ENCODE measurements at regions of chr12 and their contacts with region 1.

Region 1: GRCh38 chr12:54379401-54380201 is 4.9 kb downstream of the ZNF385A start:
- DNase-seq: peak; percentile 92 to 96
- ATAC-seq: peak; percentile 74 to 91
- H3K4me3 ChIP-seq: peak overlapping the region; percentile 61
- H3K27ac ChIP-seq: peak overlapping the region; percentile 81 to 96
- H3K4me1 ChIP-seq: peaks cover 43% of the 10 kb centered on the region
- CTCF ChIP-seq: peak; percentile 100
- EP300 ChIP-seq: no peak
- POLR2A ChIP-seq: no peak
- RAD21 ChIP-seq: peak; percentile 94 to 96

Region 2: DNA sequence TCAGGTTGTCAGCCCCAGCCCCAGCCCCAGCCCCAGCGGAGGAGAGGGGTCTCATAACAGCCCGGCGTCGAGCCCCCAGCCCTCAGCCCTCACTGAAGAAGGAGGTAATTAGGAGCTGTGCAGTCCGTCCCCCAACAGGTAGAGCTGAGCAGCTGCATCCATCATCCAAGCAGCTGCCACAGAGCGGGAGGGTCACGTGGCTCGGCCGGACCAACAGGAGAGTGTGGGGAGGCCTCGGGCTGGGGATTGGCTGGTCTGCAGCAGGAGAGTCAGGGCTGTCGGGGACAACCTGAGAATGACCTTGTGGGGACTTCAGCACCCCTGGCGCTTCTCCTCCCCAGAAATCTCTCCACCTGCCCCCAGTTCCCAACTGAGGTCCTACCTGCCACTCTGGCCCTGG is 220.5 kb before region 1 on chr12:
- CTCF ChIA-PET with region 1: no interaction called
- POLR2A ChIA-PET with region 1: no interaction called
- DNase-seq: no peak
- ATAC-seq: peak in 1 of 2 experiments; percentile 75; a peak in 3 of 6 replicates
- H3K4me3 ChIP-seq: no peak overlapping the region
- H3K27ac ChIP-seq: no peak overlapping the region
- H3K4me1 ChIP-seq: no peaks in the 10 kb centered on the region
- CTCF ChIP-seq: no peak
- EP300 ChIP-seq: no peak
- POLR2A ChIP-seq: no peak
- RAD21 ChIP-seq: no peak

Region 3: DNA sequence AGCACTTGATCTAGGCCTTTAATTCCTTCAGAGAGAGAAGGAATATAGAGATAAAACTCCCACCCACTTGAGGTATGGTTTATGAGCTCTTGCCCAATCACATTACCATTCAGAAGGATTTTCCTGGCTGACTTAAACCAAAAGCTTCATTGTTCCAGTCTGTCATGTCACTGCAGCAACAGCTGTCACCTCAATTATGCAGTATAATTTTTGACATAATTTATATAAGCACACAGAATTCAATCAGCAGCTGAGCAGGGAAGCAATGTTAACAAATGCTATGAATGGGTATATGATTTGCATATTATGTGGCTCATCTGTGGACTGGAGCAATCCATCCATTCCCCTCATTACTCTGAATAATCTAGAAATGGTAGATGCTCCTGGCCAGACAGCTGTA is 140.0 kb before region 1 on chr12:
- CTCF ChIA-PET with region 1: no interaction called
- POLR2A ChIA-PET with region 1: no interaction called
- DNase-seq: no peak
- ATAC-seq: no peak
- H3K4me3 ChIP-seq: no peak overlapping the region
- H3K27ac ChIP-seq: no peak overlapping the region
- H3K4me1 ChIP-seq: no peaks in the 10 kb centered on the region
- CTCF ChIP-seq: no peak
- EP300 ChIP-seq: no peak
- POLR2A ChIP-seq: no peak
- RAD21 ChIP-seq: no peak

Region 4: GRCh38 chr12:54294152-54294952 is 85.2 kb before region 1 on chr12:
- CTCF ChIA-PET with region 1: interaction called, 21 read pairs
- POLR2A ChIA-PET with region 1: no interaction called
- DNase-seq: peak; percentile 68 to 83
- ATAC-seq: peak; percentile 31 to 51; a peak in 4 of 6 replicates
- H3K4me3 ChIP-seq: no peak overlapping the region
- H3K27ac ChIP-seq: no peak overlapping the region
- H3K4me1 ChIP-seq: no peaks in the 10 kb centered on the region
- CTCF ChIP-seq: peak; percentile 67
- EP300 ChIP-seq: no peak
- POLR2A ChIP-seq: no peak
- RAD21 ChIP-seq: peak; percentile 64 to 82

Region 5: GRCh38 chr12:54359033-54359761 is 20.4 kb before region 1 on chr12:
- CTCF ChIA-PET with region 1: interaction called, 26 read pairs
- POLR2A ChIA-PET with region 1: no interaction called
- DNase-seq: peak; percentile 99 to 100
- ATAC-seq: peak; percentile 80 to 92
- H3K4me3 ChIP-seq: peak overlapping the region; percentile 54
- H3K27ac ChIP-seq: peak overlapping the region; percentile 81 to 91
- H3K4me1 ChIP-seq: peaks cover 28% of the 10 kb centered on the region
- CTCF ChIP-seq: no peak
- EP300 ChIP-seq: no peak
- POLR2A ChIP-seq: peak; percentile 38; the same call in 1 of the 2 replicates
- RAD21 ChIP-seq: no peak

Region 6: DNA sequence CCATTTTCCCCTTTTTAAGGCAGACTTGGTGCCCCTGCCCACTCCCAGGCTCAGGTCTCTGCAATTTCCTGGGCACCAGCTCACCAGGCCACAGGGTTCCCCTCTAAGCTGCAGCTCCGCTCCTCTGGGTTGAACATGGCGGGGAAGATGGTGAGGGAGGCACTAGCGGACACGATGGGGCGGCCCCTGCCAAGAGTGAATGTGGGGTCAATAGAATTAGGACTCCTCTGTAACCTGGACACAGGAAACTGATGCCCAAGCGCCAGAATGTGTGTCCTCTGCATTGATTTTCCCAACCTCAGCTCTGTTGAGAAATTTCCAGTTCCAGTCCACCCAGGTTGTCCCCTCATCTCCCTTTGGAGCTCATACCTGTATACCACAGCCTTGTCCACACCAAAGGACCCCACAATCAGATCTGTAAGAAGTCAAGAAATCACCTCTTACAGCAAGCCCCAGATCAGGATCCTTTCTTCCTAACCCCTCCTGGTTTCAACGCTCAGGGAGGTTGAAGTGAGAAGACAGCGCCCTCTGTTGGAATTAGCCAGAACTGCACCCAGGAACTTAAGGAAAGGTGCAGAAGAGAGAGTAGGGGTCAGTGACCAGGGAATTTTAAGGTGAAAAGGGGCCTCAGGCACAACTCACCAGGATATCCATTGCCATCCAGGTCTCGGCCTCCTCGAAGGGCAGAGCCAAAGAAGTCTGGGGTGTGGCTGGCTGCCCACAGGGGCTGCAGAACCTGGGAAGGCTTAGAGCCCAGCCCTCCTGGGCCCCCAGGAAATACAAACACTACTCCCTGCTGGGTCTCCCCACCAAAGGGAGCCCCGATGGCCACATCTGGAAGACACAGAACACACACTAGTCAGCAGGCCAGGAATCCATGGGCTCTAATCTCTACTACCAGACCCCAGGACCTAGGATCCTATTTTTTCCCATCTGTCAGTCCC is 24.7 kb after region 1 on chr12:
- CTCF ChIA-PET with region 1: interaction called, 224 read pairs
- POLR2A ChIA-PET with region 1: no interaction called
- DNase-seq: peak in 1 of 2 experiments; percentile 66
- ATAC-seq: peak in 1 of 2 experiments; percentile 71; a peak in 3 of 6 replicates
- H3K4me3 ChIP-seq: no peak overlapping the region
- H3K27ac ChIP-seq: no peak overlapping the region
- H3K4me1 ChIP-seq: no peaks in the 10 kb centered on the region
- CTCF ChIP-seq: peak; percentile 74
- EP300 ChIP-seq: no peak
- POLR2A ChIP-seq: no peak
- RAD21 ChIP-seq: peak in 1 of 2 experiments; percentile 39; a peak in 2 of 5 replicates

Region 7: DNA sequence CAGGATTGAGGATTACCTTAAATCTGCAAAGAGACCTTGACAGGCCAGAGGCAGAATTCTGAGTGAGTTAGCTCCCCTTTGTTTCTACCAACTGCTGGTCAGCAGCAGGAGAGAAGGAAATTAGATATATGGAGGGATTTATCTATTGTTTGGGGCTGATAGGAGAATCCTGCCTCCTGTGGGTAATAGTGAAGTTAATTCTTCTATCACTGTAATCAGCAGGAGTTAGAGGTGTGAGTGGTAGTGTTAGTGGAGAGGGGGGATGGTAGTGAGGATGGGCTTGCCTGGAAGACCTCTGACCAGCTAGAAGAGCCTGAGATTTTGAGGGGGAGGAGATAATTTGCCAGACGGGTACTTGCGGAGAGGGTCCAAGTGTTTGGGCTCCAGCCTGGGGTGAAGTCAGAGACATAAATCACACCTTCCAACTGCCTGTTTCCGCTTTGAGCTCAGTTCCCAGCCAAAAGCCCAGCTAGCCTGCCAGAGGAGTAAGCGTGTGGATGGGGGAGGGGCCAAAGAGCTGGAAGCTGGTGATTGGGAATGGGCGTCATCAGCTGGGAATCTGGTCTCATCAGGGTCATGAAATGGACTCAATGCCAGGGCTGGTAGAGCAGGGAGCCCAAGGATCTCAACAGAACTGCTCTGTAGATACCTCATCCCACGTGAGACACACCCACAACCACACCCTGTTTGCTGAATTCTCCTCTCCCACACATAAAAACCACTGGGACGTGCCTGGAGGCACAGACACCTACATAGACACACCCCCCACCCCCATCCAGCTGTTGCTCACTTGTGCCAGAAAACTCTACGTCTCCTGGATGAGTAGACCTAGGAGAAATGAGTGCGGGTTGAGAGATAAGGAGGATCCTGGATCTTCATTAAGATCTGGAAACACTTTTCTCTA is 52.6 kb after region 1 on chr12:
- CTCF ChIA-PET with region 1: interaction called, 77 read pairs
- POLR2A ChIA-PET with region 1: no interaction called
- DNase-seq: peak in 1 of 2 experiments; percentile 70
- ATAC-seq: peak; percentile 26 to 48; a peak in 3 of 6 replicates
- H3K4me3 ChIP-seq: no peak overlapping the region
- H3K27ac ChIP-seq: peak overlapping the region in 1 of 2 experiments; percentile 18; a peak in 1 of 6 replicates
- H3K4me1 ChIP-seq: peaks cover 34% of the 10 kb centered on the region
- CTCF ChIP-seq: no peak
- EP300 ChIP-seq: no peak
- POLR2A ChIP-seq: no peak
- RAD21 ChIP-seq: no peak

Region 8: DNA sequence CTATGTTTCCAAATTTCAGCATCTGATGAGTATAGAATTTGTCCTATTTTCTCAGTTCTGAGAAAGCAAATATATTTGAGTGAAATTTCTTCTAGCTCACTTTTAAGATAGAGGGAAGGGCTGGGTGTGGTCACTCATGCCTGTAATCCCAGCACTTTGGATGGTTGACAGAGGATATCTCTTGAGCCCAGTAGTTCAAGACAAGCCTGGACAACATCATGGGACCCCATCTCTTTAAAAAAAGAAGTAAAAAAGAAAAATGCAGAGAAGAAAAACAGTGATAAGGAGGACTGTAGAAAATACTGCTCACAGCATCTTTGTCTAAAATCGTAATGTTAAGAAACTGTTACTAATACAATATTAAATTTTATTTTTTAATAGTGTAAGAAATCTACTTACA is 1092.7 kb after region 1 on chr12:
- CTCF ChIA-PET with region 1: no interaction called
- POLR2A ChIA-PET with region 1: no interaction called
- DNase-seq: no peak
- ATAC-seq: no peak
- H3K4me3 ChIP-seq: no peak overlapping the region
- H3K27ac ChIP-seq: no peak overlapping the region
- H3K4me1 ChIP-seq: no peaks in the 10 kb centered on the region
- CTCF ChIP-seq: no peak
- EP300 ChIP-seq: no peak
- POLR2A ChIP-seq: no peak
- RAD21 ChIP-seq: no peak

Measured in A549 (cell line).